B cell (primary cell): ENCODE measurements at regions of chr20 and their contacts with region 1.

Region 1: GRCh38 chr20:36861875-36862801 is 13.8 kb upstream of the TLDC2 start:
- DNase-seq: no peak
- ATAC-seq: no peak
- H3K4me3 ChIP-seq: peak overlapping the region in 4 of 5 experiments; percentile 31 to 65 (median 48)
- H3K4me3 Mint-ChIP-seq: peak overlapping the region; percentile 60
- H3K27ac ChIP-seq: no peak overlapping the region
- H3K27ac Mint-ChIP-seq: peak overlapping the region; percentile 50
- H3K4me1 ChIP-seq: peaks cover 46 to 49% of the 10 kb centered on the region in 2 donors
- H3K4me1 Mint-ChIP-seq: peaks cover 69% of the 10 kb centered on the region
- H3K27me3 ChIP-seq: no peaks in the 10 kb centered on the region
- H3K27me3 Mint-ChIP-seq: no peaks in the 10 kb centered on the region
- CTCF ChIP-seq: no peak

Region 2: GRCh38 chr20:36460648-36461599 is 401.2 kb before region 1 on chr20:
- CTCF ChIA-PET with region 1: no interaction called
- POLR2A ChIA-PET with region 1: no interaction called
- intact Hi-C with region 1: loop called (anchors 10 kb)
- DNase-seq: peak; percentile 97
- ATAC-seq: peak; percentile 80
- H3K4me3 ChIP-seq: peak overlapping the region; percentile 40 to 79 (median 47)
- H3K4me3 Mint-ChIP-seq: peak overlapping the region; percentile 81
- H3K27ac ChIP-seq: peak overlapping the region; percentile 96 to 98
- H3K27ac Mint-ChIP-seq: peak overlapping the region; percentile 91
- H3K4me1 ChIP-seq: peaks cover 42 to 49% of the 10 kb centered on the region in 2 donors
- H3K4me1 Mint-ChIP-seq: peaks cover 46% of the 10 kb centered on the region
- H3K27me3 ChIP-seq: no peaks in the 10 kb centered on the region
- H3K27me3 Mint-ChIP-seq: no peaks in the 10 kb centered on the region
- CTCF ChIP-seq: no peak

Region 3: DNA sequence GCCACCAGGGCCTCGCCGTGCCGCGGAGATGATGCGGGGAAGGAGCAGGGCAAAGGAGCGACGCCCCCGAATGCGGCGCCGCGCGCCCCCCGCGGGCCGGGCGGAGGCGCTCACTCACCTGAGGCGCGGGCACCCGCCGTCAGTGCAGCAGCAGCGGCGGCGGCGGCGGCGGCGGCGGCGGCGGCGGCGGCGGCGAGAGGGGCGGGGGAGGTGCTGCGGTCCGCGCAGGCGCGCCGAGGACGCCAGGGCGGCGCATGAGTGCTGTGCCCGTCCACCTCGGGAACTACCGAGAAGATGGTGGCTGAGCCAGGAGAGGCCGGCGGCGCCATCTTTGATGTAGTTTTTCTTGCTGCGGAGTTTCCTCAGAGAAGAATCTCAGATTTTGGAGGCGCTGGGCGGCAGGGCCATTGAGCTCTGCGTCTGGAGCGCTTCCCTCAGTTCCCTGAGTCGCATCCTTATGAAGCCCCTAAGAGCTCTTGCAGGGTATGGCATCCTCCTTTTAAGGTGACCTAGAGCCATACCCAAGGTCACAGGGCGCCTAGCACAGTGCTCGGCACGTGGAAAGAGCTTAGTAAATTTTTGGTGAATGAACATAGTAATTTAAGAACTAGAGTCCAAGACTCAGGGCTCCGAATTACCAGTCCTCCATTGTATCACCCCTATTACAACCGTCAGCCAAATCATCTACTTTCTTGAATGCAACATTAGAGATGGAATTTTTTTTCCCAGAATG is 116.0 kb before region 1 on chr20 and contains the start of gene NDRG3:
- CTCF ChIA-PET with region 1: interaction called, 20 read pairs
- POLR2A ChIA-PET with region 1: no interaction called
- intact Hi-C with region 1: loop called (anchors 1 kb)
- DNase-seq: peak; percentile 96
- ATAC-seq: peak; percentile 97
- H3K4me3 ChIP-seq: peak within 1 kb of the TSS; percentile 55 to 87 (median 74)
- H3K4me3 Mint-ChIP-seq: peak within 1 kb of the TSS; percentile 91
- H3K27ac ChIP-seq: peak within 1 kb of the TSS; percentile 50 to 79
- H3K27ac Mint-ChIP-seq: peak within 1 kb of the TSS; percentile 93
- H3K4me1 ChIP-seq: peaks cover 12 to 13% of the 10 kb centered on the region in 2 donors
- H3K4me1 Mint-ChIP-seq: peaks cover 21% of the 10 kb centered on the region
- H3K27me3 ChIP-seq: no peaks in the 10 kb centered on the region
- H3K27me3 Mint-ChIP-seq: no peaks in the 10 kb centered on the region
- CTCF ChIP-seq: peak; percentile 26
- total RNA-seq, gene NDRG3: 26.1 and 27.5 TPM in 2 replicates

Region 4: DNA sequence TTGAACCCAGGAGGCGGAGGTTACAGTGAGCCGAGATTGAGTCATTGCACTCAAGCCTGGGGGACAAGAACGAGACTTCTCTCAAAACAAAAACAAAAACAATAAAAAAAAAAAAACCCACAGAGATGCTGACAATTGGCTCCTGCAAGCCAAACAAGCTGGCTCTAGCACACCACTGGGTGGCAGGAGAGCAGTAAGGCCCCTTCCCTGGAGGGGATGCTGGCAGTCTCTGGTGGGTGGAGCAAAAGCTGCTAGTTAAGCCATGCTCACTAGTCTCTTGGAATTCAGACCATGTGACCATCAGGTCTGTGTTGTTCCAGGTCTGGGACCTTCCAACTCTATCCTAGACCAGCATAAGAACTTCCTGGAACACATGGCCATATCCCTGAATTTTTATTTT is 69.7 kb before region 1 on chr20:
- CTCF ChIA-PET with region 1: interaction called, 19 read pairs
- POLR2A ChIA-PET with region 1: interaction called, 7 read pairs
- intact Hi-C with region 1: no loop called
- DNase-seq: peak; percentile 56
- ATAC-seq: peak; percentile 65
- H3K4me3 ChIP-seq: no peak overlapping the region
- H3K4me3 Mint-ChIP-seq: no peak overlapping the region
- H3K27ac ChIP-seq: no peak overlapping the region
- H3K27ac Mint-ChIP-seq: no peak overlapping the region
- H3K4me1 ChIP-seq: no peaks in the 10 kb centered on the region
- H3K4me1 Mint-ChIP-seq: peaks cover 6% of the 10 kb centered on the region
- H3K27me3 ChIP-seq: no peaks in the 10 kb centered on the region
- H3K27me3 Mint-ChIP-seq: no peaks in the 10 kb centered on the region
- CTCF ChIP-seq: peak; percentile 36

Region 5: GRCh38 chr20:36835453-36836198 is 26.5 kb before region 1 on chr20:
- CTCF ChIA-PET with region 1: interaction called, 43 read pairs
- POLR2A ChIA-PET with region 1: interaction called, 6 read pairs
- intact Hi-C with region 1: loop called (anchors 1 kb)
- DNase-seq: peak; percentile 88
- ATAC-seq: peak; percentile 93
- H3K4me3 ChIP-seq: peak overlapping the region in 4 of 5 experiments; percentile 44 to 58 (median 48)
- H3K4me3 Mint-ChIP-seq: peak overlapping the region; percentile 86
- H3K27ac ChIP-seq: peak overlapping the region; percentile 10 to 21
- H3K27ac Mint-ChIP-seq: peak overlapping the region; percentile 81
- H3K4me1 ChIP-seq: peaks cover 28 to 45% of the 10 kb centered on the region in 2 donors
- H3K4me1 Mint-ChIP-seq: peaks cover 38% of the 10 kb centered on the region
- H3K27me3 ChIP-seq: no peaks in the 10 kb centered on the region
- H3K27me3 Mint-ChIP-seq: no peaks in the 10 kb centered on the region
- CTCF ChIP-seq: no peak

Region 6: GRCh38 chr20:36886859-36887751 is 25.0 kb after region 1 on chr20:
- CTCF ChIA-PET with region 1: interaction called, 11 read pairs
- POLR2A ChIA-PET with region 1: no interaction called
- intact Hi-C with region 1: loop called (anchors 1 kb)
- DNase-seq: peak; percentile 87
- ATAC-seq: peak; percentile 98
- H3K4me3 ChIP-seq: no peak overlapping the region
- H3K4me3 Mint-ChIP-seq: peak overlapping the region; percentile 61
- H3K27ac ChIP-seq: no peak overlapping the region
- H3K27ac Mint-ChIP-seq: no peak overlapping the region
- H3K4me1 ChIP-seq: peaks cover 4 to 8% of the 10 kb centered on the region in 2 donors
- H3K4me1 Mint-ChIP-seq: peaks cover 8% of the 10 kb centered on the region
- H3K27me3 ChIP-seq: no peaks in the 10 kb centered on the region
- H3K27me3 Mint-ChIP-seq: no peaks in the 10 kb centered on the region
- CTCF ChIP-seq: peak; percentile 97